CD4-positive, alpha-beta T cell (primary cell): ENCODE measurements at regions of chr2 and their contacts with region 1.

Region 1: DNA sequence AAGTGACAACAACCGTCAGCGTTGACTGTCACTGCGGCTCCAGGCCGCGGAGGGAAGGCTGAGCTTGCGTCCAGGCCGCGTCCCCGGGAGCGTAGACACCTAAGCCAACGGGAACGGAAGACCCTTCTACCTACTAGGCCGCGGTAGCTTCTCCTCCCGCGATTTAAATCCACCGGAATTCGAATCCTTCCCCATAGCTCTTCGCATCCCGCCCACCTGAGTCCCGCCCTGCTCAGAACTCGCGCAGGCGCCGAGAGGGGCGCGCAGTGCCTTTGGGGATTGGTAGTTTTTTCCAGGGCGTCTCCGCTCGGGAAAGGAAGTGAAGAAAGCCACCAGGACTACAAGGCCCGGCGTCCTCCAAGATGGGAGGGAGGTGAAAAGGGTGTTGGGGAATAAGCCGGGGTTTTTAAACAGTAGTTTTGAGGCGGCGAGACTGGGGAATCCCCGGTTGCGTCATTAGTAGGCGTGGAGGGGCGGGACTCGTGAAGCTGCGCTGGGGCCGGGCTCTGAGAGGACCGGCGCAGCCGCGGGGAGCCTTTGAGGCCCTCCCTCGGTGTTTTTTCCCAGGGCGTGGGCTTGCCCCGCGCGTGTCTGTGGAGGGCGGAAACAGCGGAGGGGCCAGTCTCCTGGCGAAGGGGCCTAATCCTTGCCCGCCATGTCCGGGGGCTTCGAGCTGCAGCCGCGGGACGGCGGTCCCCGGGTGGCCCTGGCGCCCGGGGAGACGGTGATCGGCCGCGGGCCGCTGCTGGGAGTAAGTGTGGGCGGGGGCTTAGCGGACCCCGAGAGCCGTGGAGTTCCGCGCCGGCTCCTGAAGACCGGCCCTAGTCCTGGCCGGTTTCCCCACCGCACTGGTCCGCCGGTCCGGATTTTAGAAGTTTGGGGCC is at the starts of genes APLF and FBXO48:
- DNase-seq: peak; percentile 94 to 100 (median 98)
- ATAC-seq: peak; percentile 88
- H3K4me3 ChIP-seq: peak within 1 kb of the TSS; percentile 90
- H3K4me3 Mint-ChIP-seq: peak within 1 kb of the TSS; percentile 95
- H3K27ac ChIP-seq: peak within 1 kb of the TSS; percentile 92 to 93
- H3K27ac Mint-ChIP-seq: peak within 1 kb of the TSS; percentile 89
- H3K4me1 ChIP-seq: peaks cover 24% of the 10 kb centered on the region
- H3K4me1 Mint-ChIP-seq: peaks cover 44% of the 10 kb centered on the region
- H3K27me3 ChIP-seq: no peaks in the 10 kb centered on the region
- H3K27me3 Mint-ChIP-seq: no peaks in the 10 kb centered on the region
- CTCF ChIP-seq: no peak
- total RNA-seq, gene APLF: 4.1 to 4.3 TPM
- total RNA-seq, gene FBXO48: 0.44 to 0.50 TPM

Region 2: GRCh38 chr2:68452168-68452900 is 15.0 kb before region 1 on chr2:
- CTCF ChIA-PET with region 1: interaction called, 15 read pairs
- POLR2A ChIA-PET with region 1: interaction called, 34 read pairs
- intact Hi-C with region 1: no loop called
- DNase-seq: peak in 3 of 14 experiments; percentile 48 to 72 (median 49)
- ATAC-seq: peak; percentile 61
- H3K4me3 ChIP-seq: no peak overlapping the region
- H3K4me3 Mint-ChIP-seq: no peak overlapping the region
- H3K27ac ChIP-seq: no peak overlapping the region
- H3K27ac Mint-ChIP-seq: no peak overlapping the region
- H3K4me1 ChIP-seq: peaks cover 14% of the 10 kb centered on the region
- H3K4me1 Mint-ChIP-seq: peaks cover 21% of the 10 kb centered on the region
- H3K27me3 ChIP-seq: no peaks in the 10 kb centered on the region
- H3K27me3 Mint-ChIP-seq: no peaks in the 10 kb centered on the region
- CTCF ChIP-seq: no peak

Region 3: DNA sequence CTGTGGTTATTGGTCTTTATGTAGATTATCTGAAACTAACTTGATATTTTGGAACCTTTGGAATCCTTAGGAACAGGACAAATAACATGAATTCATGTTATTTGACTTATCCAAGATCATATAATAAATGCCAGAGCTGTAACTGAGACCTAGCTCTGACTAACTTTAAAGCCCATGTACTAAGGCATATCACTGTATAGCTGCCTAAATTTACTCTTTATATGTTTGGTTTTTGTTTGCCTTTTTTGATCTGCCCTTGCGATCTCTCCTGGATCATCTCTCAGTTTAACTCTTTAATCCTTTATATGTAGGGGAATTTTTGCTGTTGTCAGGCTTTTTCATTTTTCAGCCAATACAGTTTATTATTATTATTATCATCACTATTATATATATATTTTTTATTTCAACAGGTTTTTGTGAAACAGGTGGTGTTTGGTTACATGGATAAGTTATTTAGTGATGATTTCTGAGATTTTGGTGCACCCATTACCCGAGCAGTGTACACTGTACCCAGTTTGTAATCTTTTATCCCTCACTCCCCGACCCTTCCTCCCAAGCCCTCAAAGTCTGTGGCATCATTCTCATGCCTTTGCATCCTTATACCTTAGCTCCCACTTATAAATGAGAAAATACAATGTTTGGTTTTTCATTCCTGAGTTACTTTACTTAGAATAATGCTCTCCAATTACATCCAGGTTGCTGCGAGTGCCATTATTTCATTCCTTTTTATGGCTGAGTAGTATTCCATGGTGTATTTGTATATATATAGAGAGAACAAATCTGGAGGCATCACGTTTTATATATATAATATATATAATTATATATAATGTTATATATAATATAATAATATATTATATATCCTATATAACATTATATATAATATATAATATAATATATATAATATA is 49.0 kb after region 1 on chr2:
- CTCF ChIA-PET with region 1: no interaction called
- POLR2A ChIA-PET with region 1: interaction called, 8 read pairs
- intact Hi-C with region 1: loop called (anchors 5 kb)
- DNase-seq: peak in 1 of 14 experiments; percentile 20
- ATAC-seq: peak; percentile 55
- H3K4me3 ChIP-seq: no peak overlapping the region
- H3K4me3 Mint-ChIP-seq: no peak overlapping the region
- H3K27ac ChIP-seq: no peak overlapping the region
- H3K27ac Mint-ChIP-seq: no peak overlapping the region
- H3K4me1 ChIP-seq: no peaks in the 10 kb centered on the region
- H3K4me1 Mint-ChIP-seq: no peaks in the 10 kb centered on the region
- H3K27me3 ChIP-seq: no peaks in the 10 kb centered on the region
- H3K27me3 Mint-ChIP-seq: no peaks in the 10 kb centered on the region
- CTCF ChIP-seq: no peak

Region 4: GRCh38 chr2:68709421-68709911 is 242.1 kb after region 1 on chr2:
- CTCF ChIA-PET with region 1: interaction called, 11 read pairs
- POLR2A ChIA-PET with region 1: interaction called, 3 read pairs
- intact Hi-C with region 1: loop called in 1 of 2 experiments (anchors 5 kb)
- DNase-seq: peak in 4 of 14 experiments; percentile 36 to 62 (median 58)
- ATAC-seq: peak; percentile 77
- H3K4me3 ChIP-seq: no peak overlapping the region
- H3K4me3 Mint-ChIP-seq: no peak overlapping the region
- H3K27ac ChIP-seq: no peak overlapping the region
- H3K27ac Mint-ChIP-seq: no peak overlapping the region
- H3K4me1 ChIP-seq: peaks cover 6% of the 10 kb centered on the region
- H3K4me1 Mint-ChIP-seq: peaks cover 28% of the 10 kb centered on the region
- H3K27me3 ChIP-seq: no peaks in the 10 kb centered on the region
- H3K27me3 Mint-ChIP-seq: no peaks in the 10 kb centered on the region
- CTCF ChIP-seq: peak; percentile 92

Region 5: DNA sequence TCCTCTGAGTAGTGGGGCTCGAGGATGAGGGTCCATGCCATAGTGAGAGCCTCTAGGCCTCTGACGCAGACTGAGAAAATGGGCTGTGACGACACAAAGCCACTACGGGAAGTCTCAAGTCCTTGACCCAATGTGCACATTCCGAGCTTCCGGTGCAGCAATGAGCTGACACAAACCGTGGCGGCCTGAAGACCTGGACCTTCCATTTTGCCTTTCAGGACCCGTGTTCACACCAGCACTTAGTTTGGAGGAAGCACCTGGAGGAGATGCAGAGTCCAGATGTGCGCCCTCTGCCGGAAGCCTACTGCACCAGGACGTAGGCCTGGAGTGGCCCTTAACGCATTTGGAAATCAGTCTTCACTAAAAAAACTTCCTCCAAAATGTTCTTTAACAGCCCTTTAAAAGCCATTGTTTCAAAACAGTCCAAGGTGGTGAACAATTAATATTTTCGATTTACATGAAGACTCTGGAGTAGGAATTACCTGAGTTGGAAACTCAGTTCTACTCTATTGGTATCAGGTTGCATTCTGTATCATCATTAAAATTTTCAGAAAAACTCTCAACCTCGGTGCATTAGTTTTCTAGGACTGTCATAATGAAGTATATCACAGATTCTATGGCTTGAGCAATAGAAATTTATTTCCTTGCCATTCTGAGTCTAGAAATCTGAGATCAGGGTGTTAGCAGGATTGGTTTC is 370.0 kb after region 1 on chr2:
- CTCF ChIA-PET with region 1: no interaction called
- POLR2A ChIA-PET with region 1: no interaction called
- intact Hi-C with region 1: loop called (anchors 2 to 5 kb)
- DNase-seq: peak; percentile 54 to 86 (median 70)
- ATAC-seq: peak; percentile 85
- H3K4me3 ChIP-seq: no peak overlapping the region
- H3K4me3 Mint-ChIP-seq: no peak overlapping the region
- H3K27ac ChIP-seq: no peak overlapping the region
- H3K27ac Mint-ChIP-seq: peak overlapping the region; percentile 4
- H3K4me1 ChIP-seq: peaks cover 27% of the 10 kb centered on the region
- H3K4me1 Mint-ChIP-seq: peaks cover 38% of the 10 kb centered on the region
- H3K27me3 ChIP-seq: no peaks in the 10 kb centered on the region
- H3K27me3 Mint-ChIP-seq: no peaks in the 10 kb centered on the region
- CTCF ChIP-seq: peak; percentile 84

Region 6: GRCh38 chr2:68925295-68925896 is 458.1 kb after region 1 on chr2:
- CTCF ChIA-PET with region 1: interaction called, 50 read pairs
- POLR2A ChIA-PET with region 1: interaction called, 12 read pairs
- intact Hi-C with region 1: loop called (anchors 1 to 2 kb)
- DNase-seq: peak; percentile 25 to 83 (median 44)
- ATAC-seq: peak; percentile 90
- H3K4me3 ChIP-seq: no peak overlapping the region
- H3K4me3 Mint-ChIP-seq: no peak overlapping the region
- H3K27ac ChIP-seq: no peak overlapping the region
- H3K27ac Mint-ChIP-seq: no peak overlapping the region
- H3K4me1 ChIP-seq: no peaks in the 10 kb centered on the region
- H3K4me1 Mint-ChIP-seq: peaks cover 7% of the 10 kb centered on the region
- H3K27me3 ChIP-seq: no peaks in the 10 kb centered on the region
- H3K27me3 Mint-ChIP-seq: peaks cover 6% of the 10 kb centered on the region
- CTCF ChIP-seq: peak; percentile 97